Posterior vena cava (tissue), 2 donors: ENCODE measurements at regions of chr15 and their contacts with region 1.

Region 1: GRCh38 chr15:101251830-101252820 is at the start of gene CHSY1:
- DNase-seq: peak; percentile 98
- total RNA-seq, gene CHSY1: 48.6 to 57.3 TPM

Region 2: GRCh38 chr15:100349696-100350433 is 902.3 kb before region 1 on chr15:
- intact Hi-C with region 1: no loop called
- DNase-seq: peak; percentile 98

Region 3: DNA sequence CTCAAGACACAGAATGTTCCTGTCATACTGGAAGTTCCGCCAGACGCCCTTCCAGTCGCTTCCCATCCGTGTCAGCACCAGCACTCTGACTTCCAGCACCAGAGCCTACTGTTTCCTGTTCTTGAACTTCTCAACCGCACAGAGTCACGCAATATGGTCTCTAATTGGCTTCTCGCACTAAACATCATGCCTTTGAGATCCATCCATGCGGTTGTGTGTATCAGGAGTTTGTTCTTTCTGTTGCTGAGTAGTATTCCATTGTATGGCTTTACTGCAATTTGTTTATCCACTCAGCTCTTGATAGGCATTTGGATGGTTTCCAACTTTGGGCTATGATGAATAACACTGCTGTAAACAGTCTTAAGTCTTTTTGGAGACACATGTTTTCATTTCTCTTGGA is 220.9 kb before region 1 on chr15:
- intact Hi-C with region 1: no loop called
- DNase-seq: peak; percentile 30

Region 4: DNA sequence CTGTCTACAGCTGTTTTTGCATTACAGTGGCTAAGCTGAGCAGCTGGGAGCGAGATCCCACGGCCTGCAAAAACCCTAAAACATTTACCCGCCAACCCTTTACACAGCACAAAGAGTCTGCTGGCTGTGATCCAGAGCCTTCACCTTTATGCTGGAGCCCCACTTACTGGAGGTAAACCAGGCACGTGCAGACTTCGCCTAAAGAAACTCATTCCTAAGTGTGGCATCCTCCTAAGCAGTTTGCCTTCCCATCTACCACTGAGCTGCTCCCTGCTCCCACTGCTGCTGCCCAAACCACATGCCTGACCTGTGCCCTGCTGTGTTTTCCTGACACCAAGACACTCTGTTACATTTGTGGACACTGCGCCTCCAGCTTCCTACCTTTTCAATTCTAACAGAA is 53.3 kb before region 1 on chr15:
- intact Hi-C with region 1: loop called in 1 of 2 experiments (anchors 5 kb)
- DNase-seq: peak; percentile 71